ENCODE measurements at regions of chr1 and their contacts with region 1.

Region 1: GRCh38 chr1:26279456-26280332 is at the start of gene SH3BGRL3:
- DNase-seq: peak; percentile 90
- H3K4me3 ChIP-seq: peak within 1 kb of the TSS; percentile 72
- H3K27ac ChIP-seq: peak within 1 kb of the TSS; percentile 71
- H3K4me1 ChIP-seq: peaks cover 57% of the 10 kb centered on the region
- H3K27me3 ChIP-seq: no peaks in the 10 kb centered on the region
- CTCF ChIP-seq: peak; percentile 77
- total RNA-seq, gene SH3BGRL3: 133 and 138 TPM in 2 replicates

Region 2: GRCh38 chr1:25562101-25562927 is 717.4 kb before region 1 on chr1:
- CTCF ChIA-PET with region 1: no interaction called
- POLR2A ChIA-PET with region 1: no interaction called
- intact Hi-C with region 1: no loop called
- DNase-seq: no peak
- H3K4me3 ChIP-seq: no peak overlapping the region
- H3K27ac ChIP-seq: no peak overlapping the region
- H3K4me1 ChIP-seq: peaks cover 2% of the 10 kb centered on the region
- H3K27me3 ChIP-seq: no peaks in the 10 kb centered on the region
- CTCF ChIP-seq: no peak

Region 3: GRCh38 chr1:26233903-26234643 is 45.6 kb before region 1 on chr1 and contains the start of gene CEP85:
- CTCF ChIA-PET with region 1: interaction called, 6 read pairs
- POLR2A ChIA-PET with region 1: no interaction called
- intact Hi-C with region 1: loop called (anchors 5 kb)
- DNase-seq: peak; percentile 97
- H3K4me3 ChIP-seq: peak within 1 kb of the TSS; percentile 76
- H3K27ac ChIP-seq: peak within 1 kb of the TSS; percentile 79
- H3K4me1 ChIP-seq: peaks cover 28% of the 10 kb centered on the region
- H3K27me3 ChIP-seq: no peaks in the 10 kb centered on the region
- CTCF ChIP-seq: peak; percentile 92
- total RNA-seq, gene CEP85: 51.3 and 51.5 TPM in 2 replicates